WTC11 (cell line): ENCODE measurements at regions of chr17 and their contacts with region 1.

Region 1: DNA sequence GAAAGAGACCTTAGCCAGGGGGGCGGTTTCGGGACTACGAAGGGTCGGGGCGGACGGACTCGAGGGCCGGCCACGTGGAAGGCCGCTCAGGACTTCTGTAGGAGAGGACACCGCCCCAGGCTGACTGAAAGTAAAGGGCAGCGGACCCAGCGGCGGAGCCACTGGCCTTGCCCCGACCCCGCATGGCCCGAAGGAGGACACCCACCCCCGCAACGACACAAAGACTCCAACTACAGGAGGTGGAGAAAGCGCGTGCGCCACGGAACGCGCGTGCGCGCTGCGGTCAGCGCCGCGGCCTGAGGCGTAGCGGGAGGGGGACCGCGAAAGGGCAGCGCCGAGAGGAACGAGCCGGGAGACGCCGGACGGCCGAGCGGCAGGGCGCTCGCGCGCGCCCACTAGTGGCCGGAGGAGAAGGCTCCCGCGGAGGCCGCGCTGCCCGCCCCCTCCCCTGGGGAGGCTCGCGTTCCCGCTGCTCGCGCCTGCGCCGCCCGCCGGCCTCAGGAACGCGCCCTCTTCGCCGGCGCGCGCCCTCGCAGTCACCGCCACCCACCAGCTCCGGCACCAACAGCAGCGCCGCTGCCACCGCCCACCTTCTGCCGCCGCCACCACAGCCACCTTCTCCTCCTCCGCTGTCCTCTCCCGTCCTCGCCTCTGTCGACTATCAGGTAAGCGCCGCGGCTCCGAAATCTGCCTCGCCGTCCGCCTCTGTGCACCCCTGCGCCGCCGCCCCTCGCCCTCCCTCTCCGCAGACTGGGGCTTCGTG is at the start of gene MAPT:
- DNase-seq: peak; percentile 89
- ATAC-seq: peak; percentile 64
- H3K4me3 Mint-ChIP-seq: peak within 1 kb of the TSS; percentile 73
- H3K27ac Mint-ChIP-seq: no peak within 1 kb of the TSS
- H3K4me1 Mint-ChIP-seq: peaks cover 18% of the 10 kb centered on the region
- H3K27me3 Mint-ChIP-seq: peaks cover 86% of the 10 kb centered on the region
- CTCF ChIP-seq: peak; percentile 83
- total RNA-seq, gene MAPT: 2.2 to 4.2 TPM (median 2.9 TPM) in 3 replicates

Region 2: DNA sequence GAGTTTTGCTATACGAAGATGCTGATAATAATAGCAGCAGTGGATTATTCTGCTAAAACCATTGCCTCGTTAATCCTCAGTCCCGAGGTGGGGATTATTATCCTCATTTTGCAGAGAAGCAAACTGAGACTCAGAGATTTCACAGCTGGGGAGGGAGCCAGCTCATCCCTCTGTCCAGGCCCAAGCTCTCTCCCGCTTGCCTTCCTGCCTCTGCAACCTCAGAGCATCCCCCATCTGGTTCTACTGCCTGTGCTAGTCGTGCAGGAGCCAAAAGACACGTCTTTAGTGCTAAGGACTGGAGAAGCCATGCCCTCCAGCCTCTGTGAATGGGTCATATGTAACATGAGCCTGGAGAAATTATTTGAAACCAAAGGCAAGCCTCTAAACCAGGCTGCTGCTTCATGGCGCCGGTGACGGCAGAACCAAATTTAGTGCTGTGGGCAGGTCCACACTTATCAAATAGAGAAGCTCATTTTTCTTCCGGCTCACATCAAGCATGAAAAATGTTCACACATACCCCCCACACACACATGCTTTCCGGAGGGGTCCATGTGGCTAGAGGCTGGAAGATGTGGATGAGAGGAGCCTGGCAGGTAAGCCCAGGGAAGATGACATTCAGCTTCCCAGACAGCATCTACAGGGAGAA is 13.7 kb after region 1 on chr17:
- CTCF ChIA-PET with region 1: interaction called, 17 read pairs
- POLR2A ChIA-PET with region 1: interaction called, 4 read pairs
- DNase-seq: no peak
- ATAC-seq: no peak
- H3K4me3 Mint-ChIP-seq: no peak overlapping the region
- H3K27ac Mint-ChIP-seq: no peak overlapping the region
- H3K4me1 Mint-ChIP-seq: peaks cover 14% of the 10 kb centered on the region
- H3K27me3 Mint-ChIP-seq: peaks cover 6% of the 10 kb centered on the region
- CTCF ChIP-seq: no peak